ENCODE measurements at regions of chr9 and their contacts with region 1.

Region 1: GRCh38 chr9:5186416-5187169 is 1.2 kb upstream of the INSL6 start:
- DNase-seq: peak; percentile 67 to 72 (median 71)
- H3K4me3 ChIP-seq: no peak overlapping the region
- H3K4me3 Mint-ChIP-seq: peak overlapping the region in 2 of 8 donors; percentile 3 to 48
- H3K27ac ChIP-seq: no peak overlapping the region
- H3K27ac Mint-ChIP-seq: peak overlapping the region in 5 of 7 donors; percentile 8 to 54 (median 10)
- H3K4me1 ChIP-seq: peaks cover 10% of the 10 kb centered on the region
- H3K4me1 Mint-ChIP-seq: peaks cover 4 to 13% (median 11%) of the 10 kb centered on the region in 4 donors
- H3K27me3 ChIP-seq: no peaks in the 10 kb centered on the region
- H3K27me3 Mint-ChIP-seq: no peaks in the 10 kb centered on the region

Region 2: GRCh38 chr9:5326893-5327548 is 140.4 kb after region 1 on chr9:
- CTCF ChIA-PET with region 1: interaction called, 5 read pairs
- POLR2A ChIA-PET with region 1: no interaction called
- intact Hi-C with region 1: loop called (anchors 5 kb)
- DNase-seq: peak; percentile 67 to 80 (median 78)
- H3K4me3 ChIP-seq: peak overlapping the region in 1 of 2 donors; percentile 32
- H3K4me3 Mint-ChIP-seq: peak overlapping the region; percentile 52 to 77 (median 65)
- H3K27ac ChIP-seq: no peak overlapping the region
- H3K27ac Mint-ChIP-seq: peak overlapping the region; percentile 77 to 93 (median 86)
- H3K4me1 ChIP-seq: peaks cover 16% of the 10 kb centered on the region
- H3K4me1 Mint-ChIP-seq: peaks cover 19 to 42% (median 37%) of the 10 kb centered on the region in 4 donors
- H3K27me3 ChIP-seq: no peaks in the 10 kb centered on the region
- H3K27me3 Mint-ChIP-seq: no peaks in the 10 kb centered on the region

Region 3: DNA sequence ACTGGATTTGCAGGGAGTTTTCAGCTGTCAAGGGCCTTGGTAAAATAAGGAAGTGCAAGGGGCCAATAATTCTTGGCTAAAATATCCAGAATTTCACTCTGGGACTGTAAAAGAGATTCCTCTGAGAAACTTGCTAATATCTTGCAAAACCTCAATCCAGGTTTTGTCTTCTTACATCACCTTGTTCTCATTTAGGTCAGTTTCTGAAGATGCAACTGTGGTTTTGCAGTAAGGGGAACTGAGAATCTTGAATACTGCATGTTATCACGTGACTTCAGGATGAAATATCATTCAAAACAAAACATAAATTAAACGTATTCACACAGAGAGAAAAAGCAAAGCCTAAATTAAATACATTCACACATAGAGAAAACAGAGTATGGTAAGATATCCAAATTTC is 407.3 kb after region 1 on chr9:
- CTCF ChIA-PET with region 1: interaction called, 106 read pairs
- POLR2A ChIA-PET with region 1: interaction called, 11 read pairs
- intact Hi-C with region 1: loop called (anchors 1 kb)
- DNase-seq: no peak
- H3K4me3 ChIP-seq: no peak overlapping the region
- H3K4me3 Mint-ChIP-seq: no peak overlapping the region
- H3K27ac ChIP-seq: no peak overlapping the region
- H3K27ac Mint-ChIP-seq: peak overlapping the region in 2 of 7 donors; percentile 3 to 15
- H3K4me1 ChIP-seq: peaks cover 5% of the 10 kb centered on the region
- H3K4me1 Mint-ChIP-seq: peaks cover 7 to 13% (median 8%) of the 10 kb centered on the region in 4 donors
- H3K27me3 ChIP-seq: no peaks in the 10 kb centered on the region
- H3K27me3 Mint-ChIP-seq: no peaks in the 10 kb centered on the region